H1 (cell line): ENCODE measurements at regions of chr11 and their contacts with region 1.

Region 1: GRCh38 chr11:68071281-68072048 is 32.6 kb downstream of the TCIRG1 start:
- DNase-seq: no peak
- H3K4me3 ChIP-seq: no peak overlapping the region
- H3K27ac ChIP-seq: no peak overlapping the region
- H3K4me1 ChIP-seq: no peaks in the 10 kb centered on the region
- H3K27me3 ChIP-seq: no peaks in the 10 kb centered on the region
- CTCF ChIP-seq: no peak
- EP300 ChIP-seq: no peak
- POLR2A ChIP-seq: no peak
- RAD21 ChIP-seq: no peak

Region 2: GRCh38 chr11:68081691-68082090 is 10.2 kb after region 1 on chr11:
- CTCF ChIA-PET with region 1: interaction called, 3 read pairs
- POLR2A ChIA-PET with region 1: interaction called, 12 read pairs
- DNase-seq: no peak
- H3K4me3 ChIP-seq: no peak overlapping the region
- H3K27ac ChIP-seq: no peak overlapping the region
- H3K4me1 ChIP-seq: no peaks in the 10 kb centered on the region
- H3K27me3 ChIP-seq: no peaks in the 10 kb centered on the region
- CTCF ChIP-seq: no peak
- EP300 ChIP-seq: no peak
- POLR2A ChIP-seq: no peak
- RAD21 ChIP-seq: no peak